ENCODE measurements at regions of chr18 and their contacts with region 1.

Region 1: DNA sequence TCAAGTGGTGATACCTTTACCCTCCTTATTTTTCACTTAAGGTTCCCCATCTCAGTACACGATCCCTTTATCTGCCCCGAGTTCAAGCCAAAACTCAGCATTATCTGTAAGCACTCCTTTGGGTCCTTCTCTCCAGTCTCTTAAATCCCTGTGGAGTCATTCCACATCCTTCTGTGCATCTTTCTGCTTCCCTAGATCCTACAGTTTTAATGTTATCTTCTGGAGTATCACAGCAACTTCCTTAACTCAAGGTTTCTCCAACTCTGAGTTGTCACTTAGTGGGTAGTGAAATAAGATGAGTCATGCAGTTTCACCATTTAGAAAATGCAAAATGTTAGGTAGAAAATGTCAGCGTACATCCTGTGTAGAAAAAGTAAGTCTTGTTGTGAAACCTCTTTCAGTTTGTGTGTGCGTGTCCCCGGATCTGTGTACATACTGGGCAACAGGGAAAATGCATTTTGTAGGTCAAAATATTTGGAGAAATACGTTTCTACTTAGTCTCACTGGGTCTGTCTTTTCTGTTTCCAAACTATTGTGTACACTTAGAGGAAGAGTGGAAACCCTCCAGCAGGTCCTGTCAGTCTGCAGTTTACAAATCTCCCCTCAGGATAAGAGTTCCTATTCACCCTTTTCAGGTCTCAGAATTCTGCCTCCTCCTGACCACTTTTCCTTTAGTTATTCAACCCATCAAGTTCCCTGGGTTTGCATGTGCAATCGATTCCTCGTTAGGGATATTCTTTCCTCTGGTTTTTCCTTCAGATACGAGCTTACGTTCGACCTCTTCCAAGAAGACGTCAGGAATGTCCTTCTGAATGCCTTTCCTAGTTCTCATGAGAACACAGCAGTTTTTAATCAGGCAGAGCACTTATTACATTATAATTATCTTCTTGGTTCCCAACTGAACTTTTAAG is 154.8 kb downstream of the TGIF1 start:
- DNase-seq: no peak
- ATAC-seq: no peak
- H3K4me3 Mint-ChIP-seq: no peak overlapping the region
- H3K27ac Mint-ChIP-seq: no peak overlapping the region
- H3K4me1 Mint-ChIP-seq: peaks cover 24% of the 10 kb centered on the region
- H3K27me3 Mint-ChIP-seq: no peaks in the 10 kb centered on the region
- CTCF ChIP-seq: no peak

Region 2: GRCh38 chr18:3447895-3448837 is 156.6 kb before region 1 on chr18:
- CTCF ChIA-PET with region 1: interaction called, 3 read pairs
- POLR2A ChIA-PET with region 1: interaction called, 41 read pairs
- DNase-seq: peak; percentile 97
- ATAC-seq: peak; percentile 87
- H3K4me3 Mint-ChIP-seq: peak overlapping the region; percentile 83
- H3K27ac Mint-ChIP-seq: peak overlapping the region; percentile 100
- H3K4me1 Mint-ChIP-seq: peaks cover 42% of the 10 kb centered on the region
- H3K27me3 Mint-ChIP-seq: no peaks in the 10 kb centered on the region
- CTCF ChIP-seq: no peak

Region 3: GRCh38 chr18:3454365-3455089 is 150.2 kb before region 1 on chr18:
- CTCF ChIA-PET with region 1: interaction called, 23 read pairs
- POLR2A ChIA-PET with region 1: interaction called, 41 read pairs
- DNase-seq: peak; percentile 45
- ATAC-seq: peak; percentile 7
- H3K4me3 Mint-ChIP-seq: peak overlapping the region; percentile 96
- H3K27ac Mint-ChIP-seq: peak overlapping the region; percentile 98
- H3K4me1 Mint-ChIP-seq: peaks cover 62% of the 10 kb centered on the region
- H3K27me3 Mint-ChIP-seq: no peaks in the 10 kb centered on the region
- CTCF ChIP-seq: peak; percentile 46

Region 4: GRCh38 chr18:3623769-3624545 is 19.2 kb after region 1 on chr18:
- CTCF ChIA-PET with region 1: interaction called, 5 read pairs
- POLR2A ChIA-PET with region 1: interaction called, 16 read pairs
- DNase-seq: peak; percentile 45
- ATAC-seq: peak; percentile 69
- H3K4me3 Mint-ChIP-seq: peak overlapping the region; percentile 39
- H3K27ac Mint-ChIP-seq: peak overlapping the region; percentile 98
- H3K4me1 Mint-ChIP-seq: peaks cover 38% of the 10 kb centered on the region
- H3K27me3 Mint-ChIP-seq: no peaks in the 10 kb centered on the region
- CTCF ChIP-seq: no peak